Esophagus muscularis mucosa (tissue), 4 donors: ENCODE measurements at regions of chr11 and their contacts with region 1.

Region 1: GRCh38 chr11:64742889-64743590 is 902 bp downstream of the RASGRP2 start:
- DNase-seq: no peak
- H3K4me3 ChIP-seq: peak overlapping the region; percentile 59 to 73 (median 69)
- H3K27ac ChIP-seq: peak overlapping the region; percentile 92 to 99 (median 96)
- H3K4me1 ChIP-seq: peaks cover 28 to 61% (median 55%) of the 10 kb centered on the region in 4 donors
- H3K27me3 ChIP-seq: no peaks in the 10 kb centered on the region
- CTCF ChIP-seq: peak; percentile 84 to 90 (median 88)
- EP300 ChIP-seq: no peak
- POLR2A ChIP-seq: peak; percentile 34

Region 2: DNA sequence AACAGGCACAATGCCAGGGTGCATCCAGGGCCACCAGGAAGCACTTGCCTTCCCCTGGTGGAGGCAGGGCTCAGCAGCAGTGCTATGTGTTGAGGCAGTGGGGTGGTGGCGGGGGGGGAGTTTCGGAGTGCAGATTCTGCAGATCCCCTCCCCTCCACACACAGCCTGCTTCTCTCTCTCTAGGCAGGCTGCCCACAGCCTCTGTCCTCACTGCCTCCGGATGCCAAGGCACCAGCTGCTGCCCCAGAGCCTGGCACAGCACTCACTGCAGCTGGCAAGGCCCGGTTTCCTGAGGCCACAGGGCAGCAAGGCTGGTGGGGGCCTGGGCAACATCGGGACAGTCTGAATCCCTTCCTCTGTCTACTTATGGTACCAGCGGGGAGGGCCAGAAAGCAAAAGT is 55.8 kb before region 1 on chr11:
- intact Hi-C with region 1: no loop called
- DNase-seq: no peak
- H3K4me3 ChIP-seq: no peak overlapping the region
- H3K27ac ChIP-seq: peak overlapping the region in 1 of 4 donors; percentile 65
- H3K4me1 ChIP-seq: peaks cover 13 to 25% (median 18%) of the 10 kb centered on the region in 4 donors
- H3K27me3 ChIP-seq: no peaks in the 10 kb centered on the region
- CTCF ChIP-seq: no peak
- EP300 ChIP-seq: no peak
- POLR2A ChIP-seq: no peak

Region 3: DNA sequence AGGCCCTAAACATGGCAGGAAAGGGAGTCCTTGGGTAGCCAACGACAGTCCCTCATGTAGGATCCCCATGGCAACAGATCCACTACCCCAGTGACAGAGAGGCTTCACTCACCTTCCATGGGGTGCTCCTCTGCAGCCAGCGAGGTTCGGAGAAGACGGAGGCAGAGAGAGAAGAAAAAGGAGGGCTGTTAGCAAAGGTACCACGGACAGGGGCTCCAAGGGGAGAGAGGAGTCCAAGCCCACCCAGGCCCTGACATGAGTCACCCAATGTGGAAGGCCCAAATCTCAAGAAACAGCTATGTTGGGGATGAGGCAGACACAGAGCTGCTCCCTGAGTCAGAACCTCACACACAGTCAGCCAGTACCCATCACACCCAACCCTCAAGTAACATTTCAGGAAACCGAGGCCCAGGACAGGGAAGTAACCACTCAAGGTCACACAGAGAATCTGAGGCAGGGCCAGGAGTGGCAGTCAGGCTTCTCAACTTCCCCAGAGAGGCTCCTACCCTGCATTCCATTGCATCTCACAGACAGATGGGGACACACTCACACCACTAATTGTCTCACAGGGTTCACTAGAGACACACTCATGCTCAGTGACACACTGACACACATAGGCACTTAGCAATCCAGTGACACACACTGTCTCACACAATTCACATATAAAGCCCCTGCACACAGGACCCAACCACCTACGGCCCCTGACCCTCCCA is 45.2 kb before region 1 on chr11:
- intact Hi-C with region 1: no loop called
- DNase-seq: no peak
- H3K4me3 ChIP-seq: no peak overlapping the region
- H3K27ac ChIP-seq: no peak overlapping the region
- H3K4me1 ChIP-seq: peaks cover 0 to 6% (median 0%) of the 10 kb centered on the region in 4 donors
- H3K27me3 ChIP-seq: peaks cover 0 to 46% (median 0%) of the 10 kb centered on the region in 4 donors
- CTCF ChIP-seq: no peak
- EP300 ChIP-seq: no peak
- POLR2A ChIP-seq: no peak

Region 4: GRCh38 chr11:64778508-64779346 is 35.7 kb after region 1 on chr11 and contains the start of gene SF1:
- intact Hi-C with region 1: loop called (anchors 5 kb)
- DNase-seq: peak; percentile 100
- H3K4me3 ChIP-seq: peak within 1 kb of the TSS; percentile 90 to 99 (median 96)
- H3K27ac ChIP-seq: peak within 1 kb of the TSS; percentile 99 to 100 (median 100)
- H3K4me1 ChIP-seq: peaks cover 42 to 45% (median 44%) of the 10 kb centered on the region in 4 donors
- H3K27me3 ChIP-seq: no peaks in the 10 kb centered on the region
- CTCF ChIP-seq: peak in 1 of 3 experiments; percentile 6
- EP300 ChIP-seq: no peak
- POLR2A ChIP-seq: peak; percentile 8
- total RNA-seq, gene SF1: 199 to 285 (median 234) TPM

Region 5: DNA sequence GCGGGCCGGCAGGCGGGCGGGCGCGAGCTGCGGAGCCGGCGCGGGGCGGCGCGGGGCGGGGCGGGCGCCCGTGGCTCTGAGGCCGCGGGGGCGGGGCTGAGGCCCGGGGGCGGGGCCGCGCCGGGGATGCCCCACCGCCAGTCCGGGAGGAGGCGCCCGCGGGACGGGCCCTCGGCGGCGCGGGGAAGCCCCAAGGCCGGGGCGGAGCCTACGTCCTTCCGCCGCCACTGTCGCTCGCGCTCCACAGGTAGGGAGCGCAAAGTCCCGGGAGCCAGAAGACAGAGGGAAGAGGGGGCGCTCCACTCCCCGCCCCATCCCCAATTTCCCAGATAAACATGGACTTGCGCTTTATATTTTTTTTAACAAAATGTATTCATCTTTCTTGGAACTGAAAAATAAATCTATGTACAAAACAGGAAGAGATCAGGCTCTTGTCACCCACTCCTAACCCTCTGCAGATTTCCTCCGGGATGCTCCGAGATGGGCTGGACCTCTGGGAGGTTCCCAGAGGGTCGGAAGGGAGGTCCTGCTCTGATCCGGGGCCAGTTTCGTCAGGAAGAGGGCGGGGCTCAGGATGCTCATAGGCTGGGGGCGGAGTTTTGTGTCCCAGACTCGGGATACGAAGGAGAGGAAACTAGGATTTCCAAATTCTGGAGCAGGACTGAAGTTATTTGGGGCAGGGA is 60.3 kb after region 1 on chr11 and contains the start of gene MAP4K2:
- intact Hi-C with region 1: loop called (anchors 2 kb)
- DNase-seq: peak; percentile 97
- H3K4me3 ChIP-seq: peak within 1 kb of the TSS; percentile 73 to 84 (median 78)
- H3K27ac ChIP-seq: peak within 1 kb of the TSS; percentile 85 to 93 (median 88)
- H3K4me1 ChIP-seq: peaks cover 20 to 42% (median 34%) of the 10 kb centered on the region in 4 donors
- H3K27me3 ChIP-seq: no peaks in the 10 kb centered on the region
- CTCF ChIP-seq: peak in 2 of 3 experiments; percentile 4 to 26
- EP300 ChIP-seq: no peak
- POLR2A ChIP-seq: no peak
- total RNA-seq, gene MAP4K2: 11.1 to 25.0 (median 17.1) TPM